ENCODE measurements at regions of chr20 and their contacts with region 1.

Region 1: GRCh38 chr20:44460795-44461141 is 14.9 kb upstream of the TTPAL start:
- DNase-seq: peak; percentile 23
- ATAC-seq: peak; percentile 76
- H3K4me3 ChIP-seq: no peak overlapping the region
- H3K27ac ChIP-seq: no peak overlapping the region
- H3K4me1 ChIP-seq: no peaks in the 10 kb centered on the region
- H3K27me3 ChIP-seq: peaks cover 14% of the 10 kb centered on the region
- CTCF ChIP-seq: peak; percentile 57
- POLR2A ChIP-seq: no peak
- RAD21 ChIP-seq: peak; percentile 60

Region 2: GRCh38 chr20:44217342-44218092 is 243.3 kb before region 1 on chr20:
- CTCF ChIA-PET with region 1: interaction called, 3 read pairs
- POLR2A ChIA-PET with region 1: no interaction called
- dilution Hi-C with region 1: no loop called
- in situ Hi-C with region 1: no loop called
- intact Hi-C with region 1: loop called (anchors 2 kb)
- DNase-seq: peak; percentile 67
- ATAC-seq: peak; percentile 88
- H3K4me3 ChIP-seq: no peak overlapping the region
- H3K27ac ChIP-seq: no peak overlapping the region
- H3K4me1 ChIP-seq: no peaks in the 10 kb centered on the region
- H3K27me3 ChIP-seq: no peaks in the 10 kb centered on the region
- CTCF ChIP-seq: peak; percentile 88
- POLR2A ChIP-seq: no peak
- RAD21 ChIP-seq: peak; percentile 88

Region 3: DNA sequence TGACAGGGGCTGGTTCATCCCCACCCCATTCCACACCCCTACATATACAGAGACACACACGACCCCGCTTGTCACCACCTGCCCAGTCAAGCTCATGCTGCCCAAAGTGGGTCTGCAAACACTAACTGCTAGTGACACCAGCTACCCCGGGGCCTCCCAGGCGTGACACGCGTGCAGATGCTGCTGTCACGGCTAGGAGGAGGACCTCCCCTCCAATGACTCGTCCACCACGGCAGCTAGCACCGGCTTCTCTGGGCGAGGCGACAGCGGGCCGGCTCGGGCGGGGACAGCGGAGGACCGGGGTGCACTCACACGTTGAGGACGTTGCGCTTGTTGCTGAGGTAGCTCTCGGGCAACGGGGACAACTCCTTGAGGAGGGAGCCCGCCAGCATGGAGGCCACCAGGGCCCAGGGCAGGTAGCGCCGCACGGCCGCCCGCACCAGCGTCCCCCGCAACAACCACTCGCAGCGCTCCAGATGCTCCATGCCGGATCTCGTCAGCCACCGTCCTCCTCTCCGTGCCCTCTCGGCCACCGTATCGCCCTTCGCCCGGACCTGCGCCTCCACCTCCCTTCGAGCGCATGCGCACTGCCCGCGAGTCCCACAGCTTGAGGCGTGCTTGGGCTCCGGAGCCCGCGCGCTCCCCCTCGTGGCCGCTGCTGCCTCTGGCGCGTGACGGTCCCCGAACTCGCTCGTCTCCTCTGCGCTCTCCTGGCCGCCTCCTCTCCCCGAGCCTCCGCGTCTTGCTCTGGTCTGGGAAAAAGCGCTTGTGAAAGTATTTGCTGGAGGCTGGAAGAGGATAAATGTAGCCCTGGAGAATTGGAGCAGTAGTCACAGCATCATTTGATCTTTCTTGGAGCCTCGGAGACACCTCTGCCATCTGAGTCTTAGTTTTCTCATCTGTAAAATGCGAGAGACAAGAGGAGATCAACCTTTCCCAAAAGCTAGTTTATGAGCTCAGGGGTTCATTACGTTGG is 149.8 kb before region 1 on chr20 and contains the start of gene FITM2:
- CTCF ChIA-PET with region 1: no interaction called
- POLR2A ChIA-PET with region 1: no interaction called
- dilution Hi-C with region 1: no loop called
- in situ Hi-C with region 1: no loop called
- intact Hi-C with region 1: loop called (anchors 10 kb)
- DNase-seq: peak; percentile 96
- ATAC-seq: peak; percentile 96
- H3K4me3 ChIP-seq: peak within 1 kb of the TSS; percentile 79
- H3K27ac ChIP-seq: peak within 1 kb of the TSS; percentile 64
- H3K4me1 ChIP-seq: peaks cover 4% of the 10 kb centered on the region
- H3K27me3 ChIP-seq: peaks cover 2% of the 10 kb centered on the region; the same call in 1 of the 2 replicates
- CTCF ChIP-seq: peak; percentile 98
- POLR2A ChIP-seq: 0 out of 2 replicates have a peak, but pooled peaks have one; percentile 26
- RAD21 ChIP-seq: peak; percentile 87
- total RNA-seq, gene FITM2: 6.5 and 7.2 TPM in 2 replicates

Region 4: DNA sequence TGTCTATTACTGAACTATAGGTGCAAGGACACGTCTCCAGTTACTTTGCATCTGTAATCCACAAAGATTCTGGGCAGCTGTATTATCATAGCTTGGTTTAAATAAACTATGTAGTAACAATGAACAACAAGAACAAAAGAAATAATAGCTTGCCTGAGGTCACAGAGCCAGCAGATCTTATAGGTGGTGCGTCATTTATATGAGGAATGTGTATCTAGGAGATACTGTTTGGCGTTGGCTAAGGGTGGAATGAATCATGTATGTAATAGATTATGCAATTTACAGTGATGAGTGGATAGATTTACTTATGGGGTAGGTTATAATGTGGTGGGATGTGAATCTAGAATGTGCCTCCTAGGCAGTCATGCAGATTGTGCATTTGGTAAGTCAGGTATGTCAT is 62.5 kb before region 1 on chr20:
- CTCF ChIA-PET with region 1: no interaction called
- POLR2A ChIA-PET with region 1: no interaction called
- dilution Hi-C with region 1: loop called (anchors 10 kb)
- in situ Hi-C with region 1: no loop called
- intact Hi-C with region 1: no loop called
- DNase-seq: peak; percentile 64
- ATAC-seq: no peak
- H3K4me3 ChIP-seq: no peak overlapping the region
- H3K27ac ChIP-seq: no peak overlapping the region
- H3K4me1 ChIP-seq: no peaks in the 10 kb centered on the region
- H3K27me3 ChIP-seq: peaks cover 46% of the 10 kb centered on the region
- CTCF ChIP-seq: no peak
- POLR2A ChIP-seq: no peak
- RAD21 ChIP-seq: no peak

Region 5: GRCh38 chr20:45066372-45066771 is 605.6 kb after region 1 on chr20:
- CTCF ChIA-PET with region 1: no interaction called
- POLR2A ChIA-PET with region 1: no interaction called
- dilution Hi-C with region 1: no loop called
- in situ Hi-C with region 1: no loop called
- intact Hi-C with region 1: no loop called
- DNase-seq: peak; percentile 55
- ATAC-seq: no peak
- H3K4me3 ChIP-seq: no peak overlapping the region
- H3K27ac ChIP-seq: no peak overlapping the region
- H3K4me1 ChIP-seq: peaks cover 21% of the 10 kb centered on the region; the same call in 1 of the 2 replicates
- H3K27me3 ChIP-seq: no peaks in the 10 kb centered on the region
- CTCF ChIP-seq: no peak
- POLR2A ChIP-seq: no peak
- RAD21 ChIP-seq: no peak

Measured in IMR-90 (cell line).